Transverse colon (tissue), 4 donors: ENCODE measurements at regions of chr3 and their contacts with region 1.

Region 1: GRCh38 chr3:20096135-20096685 is 56.0 kb downstream of the KAT2B start:
- DNase-seq: no peak
- H3K4me3 ChIP-seq: no peak overlapping the region
- H3K27ac ChIP-seq: no peak overlapping the region
- H3K4me1 ChIP-seq: no peaks in the 10 kb centered on the region
- H3K27me3 ChIP-seq: no peaks in the 10 kb centered on the region
- CTCF ChIP-seq: no peak
- EP300 ChIP-seq: no peak
- POLR2A ChIP-seq: no peak

Region 2: DNA sequence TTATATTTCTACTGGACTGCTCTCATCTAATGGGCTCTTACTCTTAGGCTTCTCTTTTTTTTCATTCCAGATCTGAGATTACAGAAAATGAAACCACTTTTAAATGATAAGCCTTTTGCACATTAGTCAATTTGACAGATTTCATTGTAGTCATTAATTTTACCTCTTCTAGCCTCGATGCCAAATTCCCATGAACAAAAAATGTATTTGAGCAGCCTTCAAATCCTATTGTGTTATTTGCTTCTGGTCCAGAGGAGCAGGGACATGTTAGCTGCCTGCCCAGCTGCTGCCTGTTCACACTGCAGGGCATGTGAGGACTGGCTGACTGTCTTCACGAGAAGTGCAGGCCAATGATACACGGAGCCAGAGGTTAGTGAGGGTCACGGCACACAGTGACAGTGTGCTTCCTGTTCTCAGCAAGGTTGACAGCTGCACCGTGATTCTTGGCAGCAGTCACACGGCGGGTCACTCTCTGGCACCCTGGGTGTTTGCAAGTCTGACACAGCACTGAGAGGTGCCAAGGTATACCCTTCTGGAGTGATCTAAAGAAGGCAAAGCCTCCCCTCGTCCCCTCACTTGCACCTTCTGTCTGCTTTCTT is 15.2 kb before region 1 on chr3:
- in situ Hi-C with region 1: no loop called
- intact Hi-C with region 1: no loop called
- DNase-seq: peak; percentile 19
- H3K4me3 ChIP-seq: no peak overlapping the region
- H3K27ac ChIP-seq: no peak overlapping the region
- H3K4me1 ChIP-seq: peaks cover 0 to 13% (median 5%) of the 10 kb centered on the region in 4 donors
- H3K27me3 ChIP-seq: no peaks in the 10 kb centered on the region
- CTCF ChIP-seq: no peak
- EP300 ChIP-seq: no peak
- POLR2A ChIP-seq: no peak

Region 3: DNA sequence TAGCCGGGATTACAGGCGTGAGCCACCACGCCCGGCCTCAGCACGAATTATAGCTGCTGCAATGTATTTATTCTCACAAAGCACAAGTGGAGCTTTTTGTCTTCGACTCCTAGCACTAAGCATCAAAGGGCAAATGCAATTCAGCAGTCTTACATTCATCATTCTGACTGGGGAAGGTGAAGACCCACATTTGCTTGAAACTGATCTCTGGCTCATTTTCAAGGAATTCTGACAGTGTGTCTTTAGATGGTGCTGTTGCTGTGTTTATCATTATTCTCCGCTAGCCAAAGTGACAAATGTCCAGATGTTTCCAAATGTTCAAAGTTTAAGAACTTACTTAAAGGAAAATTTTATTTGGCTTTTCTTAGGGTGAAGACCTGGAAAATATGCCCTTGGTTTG is 33.9 kb after region 1 on chr3:
- in situ Hi-C with region 1: no loop called
- intact Hi-C with region 1: no loop called
- DNase-seq: no peak
- H3K4me3 ChIP-seq: no peak overlapping the region
- H3K27ac ChIP-seq: no peak overlapping the region
- H3K4me1 ChIP-seq: no peaks in the 10 kb centered on the region
- H3K27me3 ChIP-seq: no peaks in the 10 kb centered on the region
- CTCF ChIP-seq: no peak
- EP300 ChIP-seq: no peak
- POLR2A ChIP-seq: no peak

Region 4: DNA sequence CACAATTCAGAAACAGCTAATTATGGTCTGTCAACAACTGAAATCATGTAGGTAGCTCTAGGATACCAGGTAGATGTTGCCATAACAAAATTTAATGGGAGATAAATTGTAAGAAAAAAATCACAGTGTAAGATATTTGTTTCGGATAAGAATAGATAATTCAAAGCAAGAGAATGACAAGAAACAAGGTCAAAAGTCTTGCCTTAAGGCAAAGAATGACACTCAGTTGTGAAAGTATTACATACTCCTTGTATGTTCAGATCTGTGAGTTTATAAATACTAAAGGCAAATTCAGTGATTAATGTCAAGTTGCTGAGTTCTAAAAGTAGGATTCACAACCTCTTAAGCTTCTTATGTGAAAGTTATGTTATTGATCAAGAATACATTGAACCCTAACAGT is 862.0 kb after region 1 on chr3:
- in situ Hi-C with region 1: no loop called
- intact Hi-C with region 1: loop called (anchors 10 kb)
- DNase-seq: no peak
- H3K4me3 ChIP-seq: no peak overlapping the region
- H3K27ac ChIP-seq: no peak overlapping the region
- H3K4me1 ChIP-seq: no peaks in the 10 kb centered on the region
- H3K27me3 ChIP-seq: no peaks in the 10 kb centered on the region
- CTCF ChIP-seq: no peak
- EP300 ChIP-seq: no peak
- POLR2A ChIP-seq: no peak